Endothelial cell of umbilical vein (primary cell): ENCODE measurements at regions of chr4 and their contacts with region 1.

Region 1: GRCh38 chr4:74659576-74660411 is 134.5 kb downstream of the BTC start:
- DNase-seq: peak; percentile 98
- H3K4me3 ChIP-seq: no peak overlapping the region
- H3K27ac ChIP-seq: peak overlapping the region; percentile 26
- H3K4me1 ChIP-seq: peaks cover 9% of the 10 kb centered on the region
- H3K27me3 ChIP-seq: no peaks in the 10 kb centered on the region
- CTCF ChIP-seq: no peak
- POLR2A ChIP-seq: no peak

Region 2: DNA sequence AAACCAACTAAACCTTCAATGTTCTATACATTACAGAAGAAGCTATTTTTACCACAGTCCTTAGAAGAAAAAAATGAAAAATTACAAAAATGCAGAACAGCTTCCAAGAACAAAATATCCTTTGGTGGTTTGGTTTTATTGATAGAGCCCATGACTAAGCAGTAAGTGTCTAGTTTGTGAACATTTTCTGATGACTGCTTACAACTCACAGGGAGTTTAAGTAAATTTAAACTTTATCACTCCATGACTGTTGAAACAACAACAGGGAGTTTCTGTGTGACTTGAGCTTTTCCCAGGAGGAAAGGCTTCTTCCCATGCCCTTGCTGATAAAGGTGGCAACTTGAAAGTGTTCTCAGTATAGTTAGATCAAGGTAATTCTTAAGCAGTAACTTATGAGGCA is 680.9 kb before region 1 on chr4:
- CTCF ChIA-PET with region 1: no interaction called
- POLR2A ChIA-PET with region 1: no interaction called
- dilution Hi-C with region 1: no loop called
- intact Hi-C with region 1: no loop called
- DNase-seq: no peak
- H3K4me3 ChIP-seq: no peak overlapping the region
- H3K27ac ChIP-seq: no peak overlapping the region
- H3K4me1 ChIP-seq: no peaks in the 10 kb centered on the region
- H3K27me3 ChIP-seq: no peaks in the 10 kb centered on the region
- CTCF ChIP-seq: no peak
- POLR2A ChIP-seq: no peak

Region 3: GRCh38 chr4:74632634-74633033 is 27.2 kb before region 1 on chr4:
- CTCF ChIA-PET with region 1: interaction called, 4 read pairs
- POLR2A ChIA-PET with region 1: no interaction called
- dilution Hi-C with region 1: no loop called
- intact Hi-C with region 1: loop called (anchors 1 kb)
- DNase-seq: peak; percentile 99
- H3K4me3 ChIP-seq: no peak overlapping the region
- H3K27ac ChIP-seq: peak overlapping the region; percentile 75
- H3K4me1 ChIP-seq: peaks cover 45% of the 10 kb centered on the region
- H3K27me3 ChIP-seq: no peaks in the 10 kb centered on the region
- CTCF ChIP-seq: no peak
- POLR2A ChIP-seq: peak; percentile 76

Region 4: DNA sequence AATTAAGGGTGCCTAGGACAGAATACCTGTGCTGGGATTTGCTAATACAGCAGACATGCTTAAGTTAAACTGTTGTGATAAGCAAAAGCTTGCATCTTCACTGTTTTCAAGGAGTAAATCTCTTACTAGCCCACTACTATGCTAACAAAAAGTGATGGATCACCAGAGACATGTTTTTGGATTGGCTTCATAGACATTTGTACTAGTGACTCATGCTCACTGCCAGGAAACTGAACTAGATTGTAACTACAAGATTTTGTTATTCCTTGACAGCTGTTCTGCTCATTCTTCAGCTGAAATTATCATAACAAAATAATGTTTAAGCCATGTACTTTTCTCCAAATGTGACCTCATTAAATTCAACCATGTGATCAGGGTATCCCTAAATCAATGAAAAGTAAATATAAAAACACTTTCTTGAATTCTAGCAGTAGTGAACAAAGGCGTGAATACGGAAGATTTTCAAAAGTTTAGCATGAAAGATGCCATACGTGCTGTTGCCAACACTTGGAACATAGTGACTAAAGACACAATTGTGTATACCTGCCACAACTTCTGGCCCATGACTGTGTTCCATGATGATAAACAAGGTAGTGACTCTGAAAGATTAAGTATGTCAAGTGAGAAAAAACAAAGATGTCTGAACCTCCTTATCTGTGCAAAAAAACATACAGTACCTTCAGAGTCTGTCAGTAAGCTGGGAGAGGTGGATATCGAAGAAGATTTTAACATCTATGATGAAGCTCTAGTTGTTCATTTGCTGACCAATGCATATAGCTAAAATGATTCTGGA is 19.5 kb before region 1 on chr4:
- CTCF ChIA-PET with region 1: interaction called, 3 read pairs
- POLR2A ChIA-PET with region 1: no interaction called
- dilution Hi-C with region 1: no loop called
- intact Hi-C with region 1: loop called (anchors 1 kb)
- DNase-seq: peak; percentile 95
- H3K4me3 ChIP-seq: no peak overlapping the region
- H3K27ac ChIP-seq: peak overlapping the region; percentile 78
- H3K4me1 ChIP-seq: peaks cover 20% of the 10 kb centered on the region
- H3K27me3 ChIP-seq: no peaks in the 10 kb centered on the region
- CTCF ChIP-seq: no peak
- POLR2A ChIP-seq: peak; percentile 18